Right lobe of liver (tissue), 6 donors: ENCODE measurements at regions of chr5 and their contacts with region 1.

Region 1: GRCh38 chr5:68287976-68288706 is 72.6 kb downstream of the PIK3R1 start:
- DNase-seq: peak; percentile 79 to 91 (median 88)
- ATAC-seq: peak; percentile 72 to 88 (median 81)
- H3K4me3 ChIP-seq: peak overlapping the region; percentile 48 to 64 (median 61)
- H3K27ac ChIP-seq: peak overlapping the region; percentile 80 to 94 (median 89)
- H3K4me1 ChIP-seq: peaks cover 2 to 73% (median 24%) of the 10 kb centered on the region in 4 donors
- H3K27me3 ChIP-seq: no peaks in the 10 kb centered on the region
- CTCF ChIP-seq: peak in 1 of 4 donors; percentile 6
- POLR2A ChIP-seq: peak; percentile 79

Region 2: GRCh38 chr5:67660149-67660548 is 628.0 kb before region 1 on chr5:
- intact Hi-C with region 1: no loop called
- DNase-seq: no peak
- ATAC-seq: peak in 1 of 4 donors; percentile 48
- H3K4me3 ChIP-seq: no peak overlapping the region
- H3K27ac ChIP-seq: no peak overlapping the region
- H3K4me1 ChIP-seq: no peaks in the 10 kb centered on the region
- H3K27me3 ChIP-seq: no peaks in the 10 kb centered on the region
- CTCF ChIP-seq: no peak
- POLR2A ChIP-seq: no peak

Region 3: GRCh38 chr5:68012429-68012828 is 275.7 kb before region 1 on chr5:
- intact Hi-C with region 1: no loop called
- DNase-seq: no peak
- ATAC-seq: no peak
- H3K4me3 ChIP-seq: no peak overlapping the region
- H3K27ac ChIP-seq: no peak overlapping the region
- H3K4me1 ChIP-seq: no peaks in the 10 kb centered on the region
- H3K27me3 ChIP-seq: no peaks in the 10 kb centered on the region
- CTCF ChIP-seq: no peak
- POLR2A ChIP-seq: no peak

Region 4: DNA sequence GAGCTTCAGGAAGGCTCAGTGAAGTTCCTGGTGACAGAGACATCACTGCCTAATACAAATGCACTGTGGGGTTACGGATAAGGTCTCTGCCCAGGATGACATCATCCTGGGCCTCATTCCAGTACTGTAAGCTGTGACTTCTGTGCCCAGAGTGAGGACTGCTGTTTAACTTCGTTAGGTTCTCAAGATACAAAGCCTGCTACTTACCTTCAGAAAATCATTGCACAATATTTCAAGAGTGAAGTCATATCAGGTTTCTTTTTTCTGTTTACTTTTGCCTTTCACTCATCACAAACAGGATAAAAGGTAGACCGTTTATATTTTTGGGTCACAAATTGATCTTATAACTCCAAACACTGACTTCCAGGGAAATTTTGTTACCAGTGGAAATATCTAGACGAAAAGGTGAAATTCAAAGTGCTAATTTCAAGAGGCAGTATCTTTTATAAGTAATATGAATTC is 168.6 kb after region 1 on chr5:
- intact Hi-C with region 1: loop called in 1 of 2 experiments (anchors 10 kb)
- DNase-seq: peak in 2 of 3 donors; percentile 30 to 54
- ATAC-seq: peak; percentile 86 to 96 (median 90)
- H3K4me3 ChIP-seq: no peak overlapping the region
- H3K27ac ChIP-seq: peak overlapping the region in 1 of 3 donors; percentile 2
- H3K4me1 ChIP-seq: peaks cover 0 to 31% (median 0%) of the 10 kb centered on the region in 4 donors
- H3K27me3 ChIP-seq: no peaks in the 10 kb centered on the region
- CTCF ChIP-seq: no peak
- POLR2A ChIP-seq: peak; percentile 23

Region 5: DNA sequence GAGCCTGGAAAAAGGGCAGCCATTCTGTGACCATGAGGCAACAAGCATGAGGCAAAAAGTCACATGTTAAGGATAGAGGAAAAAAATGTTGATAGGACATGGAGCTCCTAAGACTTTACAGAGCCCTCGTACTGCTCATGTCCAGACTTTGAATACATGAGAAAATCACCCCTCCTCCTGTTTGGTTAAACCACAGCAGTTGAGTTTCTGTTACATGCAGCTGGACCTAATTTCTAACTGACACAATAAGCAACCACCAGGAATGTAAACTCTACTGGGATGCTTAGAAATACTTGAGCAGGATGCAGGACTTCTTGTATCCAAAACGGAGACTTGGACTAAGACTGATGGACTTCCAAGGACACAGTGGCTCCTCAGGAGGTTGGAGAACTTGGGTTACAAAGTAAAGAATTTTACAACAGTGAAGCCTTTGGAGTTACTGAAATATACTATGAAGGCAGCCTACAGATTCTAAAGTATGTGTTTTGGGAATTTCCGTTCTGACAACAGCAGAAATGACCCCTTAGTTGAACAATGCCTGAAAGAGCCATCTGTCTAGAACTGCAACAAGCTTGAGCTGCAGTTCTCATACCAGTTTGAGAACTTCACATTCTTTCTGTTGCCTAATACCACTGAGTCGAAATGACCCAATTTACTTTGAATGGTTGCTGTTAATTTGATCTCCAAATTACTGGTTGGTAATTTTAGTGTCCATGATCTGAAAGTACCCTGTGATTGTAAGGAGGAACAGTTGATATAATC is 196.3 kb after region 1 on chr5:
- intact Hi-C with region 1: no loop called
- DNase-seq: no peak
- ATAC-seq: no peak
- H3K4me3 ChIP-seq: no peak overlapping the region
- H3K27ac ChIP-seq: no peak overlapping the region
- H3K4me1 ChIP-seq: no peaks in the 10 kb centered on the region
- H3K27me3 ChIP-seq: no peaks in the 10 kb centered on the region
- CTCF ChIP-seq: no peak
- POLR2A ChIP-seq: no peak

Region 6: DNA sequence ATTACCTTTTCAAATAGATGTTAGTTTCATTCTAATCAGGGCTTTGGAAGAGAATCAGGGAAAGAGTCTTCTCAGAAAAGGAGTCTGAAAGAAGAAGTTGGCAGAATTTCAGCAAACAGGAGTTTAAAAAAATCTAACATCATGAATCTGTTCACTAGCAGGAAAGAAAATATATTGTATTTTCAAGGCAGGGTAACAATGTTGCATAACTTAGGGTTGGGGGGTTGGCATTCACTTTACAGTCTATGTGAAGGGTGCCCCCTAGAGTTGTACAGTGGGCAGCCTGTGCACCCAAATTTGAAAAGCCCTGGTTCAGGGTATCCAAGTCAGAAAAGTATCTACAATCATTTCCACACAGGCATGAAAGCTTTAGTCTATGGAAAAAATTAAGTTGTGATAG is 457.3 kb after region 1 on chr5:
- intact Hi-C with region 1: loop called (anchors 10 kb)
- DNase-seq: peak in 1 of 3 donors; percentile 70
- ATAC-seq: peak; percentile 62 to 79 (median 72)
- H3K4me3 ChIP-seq: peak overlapping the region; percentile 22 to 57 (median 54)
- H3K27ac ChIP-seq: peak overlapping the region; percentile 58 to 89 (median 78)
- H3K4me1 ChIP-seq: peaks cover 0 to 40% (median 6%) of the 10 kb centered on the region in 4 donors
- H3K27me3 ChIP-seq: no peaks in the 10 kb centered on the region
- CTCF ChIP-seq: peak; percentile 49 to 81 (median 69)
- POLR2A ChIP-seq: no peak